Ascending aorta (tissue), 2 donors: ENCODE measurements at regions of chr9 and their contacts with region 1.

Region 1: DNA sequence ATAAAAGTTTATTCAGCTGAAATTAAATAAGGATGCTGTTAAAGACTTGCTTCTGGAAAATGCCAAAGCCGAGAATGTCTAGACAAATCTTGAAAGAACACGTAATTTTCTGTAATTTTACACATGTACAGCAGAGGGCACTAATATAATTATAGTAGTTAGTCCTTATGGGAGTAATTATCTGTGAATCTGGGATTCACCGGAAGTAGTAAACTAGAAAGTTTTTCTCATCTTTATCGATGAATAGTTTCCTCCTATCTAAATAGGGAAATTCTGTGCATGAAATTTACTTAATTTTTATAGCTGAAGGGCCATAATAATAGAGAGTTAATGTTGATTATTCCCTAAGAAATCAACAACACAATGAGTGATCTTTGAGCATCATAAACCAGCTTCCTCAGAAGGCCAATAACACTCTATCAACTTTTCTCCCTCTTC is 18.4 kb upstream of the CNTLN start:
- DNase-seq: no peak
- H3K4me3 ChIP-seq: no peak overlapping the region
- H3K27ac ChIP-seq: no peak overlapping the region
- H3K4me1 ChIP-seq: no peaks in the 10 kb centered on the region
- H3K27me3 ChIP-seq: no peaks in the 10 kb centered on the region
- CTCF ChIP-seq: peak in 2 of 3 experiments; percentile 34 to 57

Region 2: GRCh38 chr9:17134396-17135294 is 18.2 kb after region 1 on chr9 and contains the start of gene CNTLN:
- intact Hi-C with region 1: loop called (anchors 2 kb)
- DNase-seq: peak; percentile 63 to 97
- H3K4me3 ChIP-seq: peak within 1 kb of the TSS; percentile 66 to 95
- H3K27ac ChIP-seq: peak within 1 kb of the TSS; percentile 78 to 86
- H3K4me1 ChIP-seq: peaks cover 0 to 3% of the 10 kb centered on the region in 2 donors
- H3K27me3 ChIP-seq: no peaks in the 10 kb centered on the region
- CTCF ChIP-seq: no peak
- total RNA-seq, gene CNTLN: 3.5 TPM

Region 3: DNA sequence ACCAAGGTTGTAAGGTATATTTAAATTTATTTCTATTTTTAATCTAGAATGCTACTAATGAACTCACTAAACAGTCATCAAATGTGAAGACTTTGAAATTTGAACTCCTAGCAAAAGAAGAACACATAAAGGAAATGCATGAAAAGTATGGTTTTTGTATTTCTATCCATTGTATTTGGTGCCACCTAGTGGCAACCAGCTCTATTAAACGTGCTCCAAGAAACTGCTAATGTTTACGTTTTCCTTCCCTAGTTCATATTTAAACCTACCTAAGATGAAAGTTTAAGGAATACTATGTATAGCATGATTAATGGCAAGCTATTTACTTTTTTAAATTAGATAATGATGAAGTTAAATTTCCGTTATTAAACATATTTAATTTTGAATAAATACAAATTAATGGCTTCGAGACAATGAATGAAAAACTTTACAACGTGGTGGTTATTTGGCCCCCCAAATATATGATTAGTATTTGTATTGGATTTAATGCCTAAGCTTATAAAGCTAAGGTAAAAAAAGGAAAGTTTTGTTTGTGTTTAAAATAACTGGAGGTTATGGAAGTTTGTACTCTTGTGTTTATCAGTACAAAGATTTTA is 346.5 kb after region 1 on chr9:
- intact Hi-C with region 1: loop called (anchors 1 kb)
- DNase-seq: peak in 1 of 2 donors; percentile 60
- H3K4me3 ChIP-seq: no peak overlapping the region
- H3K27ac ChIP-seq: no peak overlapping the region
- H3K4me1 ChIP-seq: no peaks in the 10 kb centered on the region
- H3K27me3 ChIP-seq: no peaks in the 10 kb centered on the region
- CTCF ChIP-seq: peak; percentile 35 to 69 (median 62)

Region 4: DNA sequence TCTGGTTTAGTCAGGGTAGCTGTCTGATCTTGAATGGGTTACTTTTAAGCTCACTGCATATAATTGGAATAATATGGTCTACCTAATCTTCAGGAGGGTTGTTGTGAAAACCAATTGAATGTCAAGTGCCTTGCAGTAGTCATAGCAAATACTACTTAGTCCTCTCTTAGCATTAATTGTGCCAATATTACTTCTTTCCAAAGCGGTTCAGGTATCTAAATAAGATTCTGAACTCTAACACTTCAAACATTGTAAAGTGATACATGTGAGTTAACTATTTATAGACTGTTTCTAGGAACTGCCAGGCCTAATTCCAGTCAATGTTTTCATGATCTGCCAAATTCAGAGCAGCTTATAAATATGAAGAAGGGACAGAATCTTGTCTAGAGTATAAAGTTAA is 602.6 kb after region 1 on chr9:
- intact Hi-C with region 1: no loop called
- DNase-seq: no peak
- H3K4me3 ChIP-seq: no peak overlapping the region
- H3K27ac ChIP-seq: no peak overlapping the region
- H3K4me1 ChIP-seq: no peaks in the 10 kb centered on the region
- H3K27me3 ChIP-seq: no peaks in the 10 kb centered on the region
- CTCF ChIP-seq: no peak